Breast epithelium (tissue), 4 donors: ENCODE measurements at regions of chr3 and their contacts with region 1.

Region 1: GRCh38 chr3:31147550-31147949 is 253.1 kb upstream of the GADL1 start:
- DNase-seq: no peak
- H3K4me3 ChIP-seq: no peak overlapping the region
- H3K27ac ChIP-seq: no peak overlapping the region
- H3K4me1 ChIP-seq: no peaks in the 10 kb centered on the region
- H3K27me3 ChIP-seq: no peaks in the 10 kb centered on the region
- CTCF ChIP-seq: no peak
- POLR2A ChIP-seq: no peak

Region 2: DNA sequence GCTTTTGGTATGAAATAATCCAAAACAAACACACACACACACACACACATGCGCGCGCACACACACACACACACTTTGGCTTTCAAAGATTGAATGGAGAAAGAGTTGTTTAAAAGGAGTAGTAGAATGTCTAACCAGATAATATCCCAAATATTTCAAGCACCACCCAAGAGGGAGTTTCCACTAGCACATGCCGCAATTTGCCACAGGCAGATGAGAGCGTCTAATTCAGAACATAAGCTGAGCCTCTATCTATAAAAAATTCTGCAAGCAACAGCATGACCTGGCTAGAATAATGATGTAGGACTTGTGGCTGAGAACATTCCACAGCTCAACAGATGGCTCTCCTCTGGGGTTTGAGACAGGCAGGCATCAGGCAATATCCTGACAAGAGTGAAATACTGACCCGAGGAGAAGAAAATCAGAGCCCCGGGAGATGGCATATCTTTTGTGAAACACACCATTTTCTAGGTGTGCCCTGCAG is 49.4 kb after region 1 on chr3:
- intact Hi-C with region 1: loop called (anchors 2 kb)
- DNase-seq: peak in 1 of 2 donors; percentile 70
- H3K4me3 ChIP-seq: no peak overlapping the region
- H3K27ac ChIP-seq: no peak overlapping the region
- H3K4me1 ChIP-seq: no peaks in the 10 kb centered on the region
- H3K27me3 ChIP-seq: no peaks in the 10 kb centered on the region
- CTCF ChIP-seq: no peak
- POLR2A ChIP-seq: no peak

Region 3: DNA sequence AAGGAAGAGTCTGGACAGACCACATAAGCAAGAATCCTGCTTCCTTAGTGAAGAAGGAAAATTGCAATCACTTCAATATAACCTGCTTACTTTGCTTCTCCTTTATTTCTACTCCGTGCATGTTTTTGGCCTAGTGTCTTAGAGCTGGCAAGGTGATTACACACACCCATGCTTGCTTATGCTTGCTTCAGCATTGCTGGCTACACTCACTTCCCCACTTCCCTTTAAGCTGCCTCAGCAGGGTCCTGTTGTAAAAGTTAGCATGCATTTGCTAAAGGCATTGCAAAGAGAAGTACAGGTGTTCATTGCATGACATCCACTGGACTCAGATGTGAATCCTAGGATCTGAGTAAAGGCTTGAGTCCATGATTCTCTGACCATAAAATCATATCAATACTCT is 337.6 kb after region 1 on chr3:
- intact Hi-C with region 1: no loop called
- DNase-seq: no peak
- H3K4me3 ChIP-seq: no peak overlapping the region
- H3K27ac ChIP-seq: no peak overlapping the region
- H3K4me1 ChIP-seq: no peaks in the 10 kb centered on the region
- H3K27me3 ChIP-seq: no peaks in the 10 kb centered on the region
- CTCF ChIP-seq: no peak
- POLR2A ChIP-seq: no peak